ENCODE measurements at regions of chr15 and their contacts with region 1.

Region 1: GRCh38 chr15:36501063-36501678 is 78.3 kb upstream of the CDIN1 start:
- DNase-seq: peak; percentile 87
- ATAC-seq: peak; percentile 95
- H3K4me3 ChIP-seq: no peak overlapping the region
- H3K27ac ChIP-seq: no peak overlapping the region
- H3K4me1 ChIP-seq: peaks cover 39% of the 10 kb centered on the region
- H3K27me3 ChIP-seq: no peaks in the 10 kb centered on the region
- CTCF ChIP-seq: peak; percentile 95

Region 2: DNA sequence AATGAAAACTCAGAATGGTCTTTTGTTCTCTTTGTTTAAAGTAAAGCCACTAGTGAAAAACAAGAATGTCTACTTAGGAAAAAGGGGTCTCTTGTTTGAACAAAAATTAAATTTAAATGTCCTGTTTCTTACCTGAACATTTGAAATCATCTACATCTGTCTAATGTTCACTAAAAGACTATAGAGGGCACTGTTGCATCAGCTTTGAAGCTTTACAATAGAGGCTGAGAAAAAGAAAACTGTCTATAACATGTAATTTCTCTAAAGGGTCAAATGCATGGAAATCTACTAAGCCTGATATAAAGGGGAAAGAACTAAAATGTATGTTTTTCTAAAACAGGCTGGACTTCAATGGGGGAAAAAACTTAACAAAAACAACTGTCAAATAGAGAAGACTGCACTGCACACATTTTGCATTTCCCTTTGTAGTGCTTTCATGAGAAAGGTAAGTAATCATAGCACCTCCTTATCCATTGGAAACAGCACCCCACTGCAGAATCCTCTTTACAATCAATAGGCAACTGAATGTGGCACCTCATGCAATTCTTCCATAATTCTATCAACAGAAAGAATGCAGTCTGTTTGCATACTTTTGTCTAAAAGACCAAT is 981.5 kb before region 1 on chr15:
- CTCF ChIA-PET with region 1: no interaction called
- POLR2A ChIA-PET with region 1: no interaction called
- intact Hi-C with region 1: loop called (anchors 1 kb)
- DNase-seq: peak; percentile 69
- ATAC-seq: peak; percentile 81
- H3K4me3 ChIP-seq: no peak overlapping the region
- H3K27ac ChIP-seq: no peak overlapping the region
- H3K4me1 ChIP-seq: no peaks in the 10 kb centered on the region
- H3K27me3 ChIP-seq: no peaks in the 10 kb centered on the region
- CTCF ChIP-seq: peak; percentile 89

Region 3: DNA sequence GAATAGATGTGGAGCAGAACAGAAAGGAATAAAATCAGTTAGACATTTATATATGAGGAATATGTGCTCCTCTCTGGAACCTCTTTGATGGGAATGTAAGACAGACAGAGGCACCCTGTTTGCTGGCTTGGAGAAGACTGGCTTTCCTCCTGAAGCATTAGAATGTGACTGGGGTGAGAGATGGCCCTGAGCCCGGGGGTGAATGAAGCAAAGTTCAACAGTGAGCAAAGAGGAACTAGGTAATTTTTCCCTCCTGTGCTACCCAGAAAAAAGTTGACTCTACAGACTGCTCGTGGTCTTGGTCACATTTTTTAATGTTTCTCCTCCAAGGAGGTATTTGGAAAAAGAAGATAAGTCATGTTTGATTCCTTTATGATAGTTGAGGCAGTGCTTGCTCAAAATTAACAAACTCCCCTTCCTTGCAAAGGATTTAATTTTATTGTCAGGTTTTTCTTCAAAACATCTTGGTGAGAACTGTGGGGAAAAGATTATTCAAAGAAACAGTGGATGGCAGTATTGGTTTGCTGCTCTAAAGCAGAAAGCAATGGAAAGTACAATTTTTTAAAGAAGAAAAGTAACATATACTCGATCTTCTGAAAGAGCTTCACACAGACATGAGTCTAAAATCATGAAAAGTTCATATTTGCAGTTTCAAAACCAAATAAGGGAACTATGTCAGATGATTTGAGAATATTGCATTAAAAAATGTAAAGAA is 292.1 kb before region 1 on chr15:
- CTCF ChIA-PET with region 1: no interaction called
- POLR2A ChIA-PET with region 1: no interaction called
- intact Hi-C with region 1: loop called (anchors 5 kb)
- DNase-seq: no peak
- ATAC-seq: no peak
- H3K4me3 ChIP-seq: no peak overlapping the region
- H3K27ac ChIP-seq: no peak overlapping the region
- H3K4me1 ChIP-seq: peaks cover 13% of the 10 kb centered on the region
- H3K27me3 ChIP-seq: no peaks in the 10 kb centered on the region
- CTCF ChIP-seq: peak; percentile 46; the same call in 1 of the 2 replicates

Region 4: GRCh38 chr15:36221992-36222391 is 279.2 kb before region 1 on chr15:
- CTCF ChIA-PET with region 1: no interaction called
- POLR2A ChIA-PET with region 1: no interaction called
- intact Hi-C with region 1: no loop called
- DNase-seq: no peak
- ATAC-seq: no peak
- H3K4me3 ChIP-seq: no peak overlapping the region
- H3K27ac ChIP-seq: no peak overlapping the region
- H3K4me1 ChIP-seq: peaks cover 10% of the 10 kb centered on the region
- H3K27me3 ChIP-seq: no peaks in the 10 kb centered on the region
- CTCF ChIP-seq: no peak

Region 5: DNA sequence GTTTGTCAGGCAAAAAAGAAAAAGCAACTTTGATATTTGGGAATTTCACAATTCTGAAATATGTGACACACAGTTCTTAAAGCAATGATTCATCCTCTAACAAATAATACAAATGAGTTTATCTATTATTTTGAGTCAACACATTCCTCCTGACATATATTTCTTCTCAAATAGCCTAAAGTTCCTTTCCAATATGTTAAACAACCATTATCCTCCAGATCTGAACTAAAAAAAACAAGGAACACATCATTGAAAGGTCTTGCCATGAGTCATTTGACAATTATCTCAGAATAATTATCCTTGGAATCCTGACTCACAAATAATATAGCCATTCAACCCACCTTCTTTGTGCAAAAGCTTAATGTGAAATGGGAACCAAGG is 130.4 kb before region 1 on chr15:
- CTCF ChIA-PET with region 1: no interaction called
- POLR2A ChIA-PET with region 1: no interaction called
- intact Hi-C with region 1: loop called (anchors 5 kb)
- DNase-seq: peak; percentile 95
- ATAC-seq: peak; percentile 86
- H3K4me3 ChIP-seq: peak overlapping the region; percentile 5; the same call in 1 of the 2 replicates
- H3K27ac ChIP-seq: peak overlapping the region; percentile 87
- H3K4me1 ChIP-seq: peaks cover 60% of the 10 kb centered on the region
- H3K27me3 ChIP-seq: no peaks in the 10 kb centered on the region
- CTCF ChIP-seq: no peak

Region 6: GRCh38 chr15:36798366-36798765 is 297.2 kb after region 1 on chr15:
- CTCF ChIA-PET with region 1: no interaction called
- POLR2A ChIA-PET with region 1: no interaction called
- intact Hi-C with region 1: loop called (anchors 5 kb)
- DNase-seq: peak; percentile 92
- ATAC-seq: peak; percentile 77
- H3K4me3 ChIP-seq: no peak overlapping the region
- H3K27ac ChIP-seq: peak overlapping the region; percentile 20
- H3K4me1 ChIP-seq: peaks cover 37% of the 10 kb centered on the region
- H3K27me3 ChIP-seq: no peaks in the 10 kb centered on the region
- CTCF ChIP-seq: no peak

Region 7: DNA sequence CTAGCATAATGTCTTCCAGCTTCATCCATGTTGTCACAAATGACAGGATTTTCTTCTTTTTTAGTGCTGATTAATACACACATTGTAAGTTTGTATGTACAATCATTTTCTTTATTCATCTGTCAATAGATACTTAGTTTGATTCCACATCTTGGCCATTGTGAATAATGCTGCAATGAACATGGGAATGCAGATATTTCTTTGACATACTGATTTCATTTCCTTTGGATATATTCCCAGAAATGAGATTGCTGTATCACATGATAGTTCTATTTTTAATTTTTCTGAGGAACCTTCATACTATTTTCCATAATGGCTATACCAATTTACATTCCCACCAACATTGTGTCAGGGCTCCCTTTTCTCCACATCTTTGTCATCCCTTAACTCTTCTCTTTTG is 481.3 kb after region 1 on chr15:
- CTCF ChIA-PET with region 1: no interaction called
- POLR2A ChIA-PET with region 1: no interaction called
- intact Hi-C with region 1: no loop called
- DNase-seq: no peak
- ATAC-seq: no peak
- H3K4me3 ChIP-seq: no peak overlapping the region
- H3K27ac ChIP-seq: no peak overlapping the region
- H3K4me1 ChIP-seq: no peaks in the 10 kb centered on the region
- H3K27me3 ChIP-seq: no peaks in the 10 kb centered on the region
- CTCF ChIP-seq: no peak

Region 8: GRCh38 chr15:37134699-37135131 is 633.5 kb after region 1 on chr15:
- CTCF ChIA-PET with region 1: interaction called, 3 read pairs
- POLR2A ChIA-PET with region 1: no interaction called
- intact Hi-C with region 1: loop called (anchors 1 kb)
- DNase-seq: peak; percentile 67
- ATAC-seq: peak; percentile 86
- H3K4me3 ChIP-seq: no peak overlapping the region
- H3K27ac ChIP-seq: no peak overlapping the region
- H3K4me1 ChIP-seq: peaks cover 9% of the 10 kb centered on the region; the same call in 1 of the 2 replicates
- H3K27me3 ChIP-seq: peaks cover 7% of the 10 kb centered on the region; the same call in 1 of the 2 replicates
- CTCF ChIP-seq: peak; percentile 66